CD8-positive, alpha-beta memory T cell (primary cell): ENCODE measurements at regions of chr13 and their contacts with region 1.

Region 1: GRCh38 chr13:48094781-48095502 is at the start of gene MED4:
- DNase-seq: peak; percentile 95 to 98 (median 96)
- H3K4me3 ChIP-seq: peak within 1 kb of the TSS; percentile 85
- H3K4me3 Mint-ChIP-seq: peak within 1 kb of the TSS; percentile 91 to 98 (median 96)
- H3K27ac ChIP-seq: peak within 1 kb of the TSS; percentile 87
- H3K27ac Mint-ChIP-seq: peak within 1 kb of the TSS; percentile 86 to 99 (median 96)
- H3K4me1 ChIP-seq: peaks cover 27% of the 10 kb centered on the region
- H3K4me1 Mint-ChIP-seq: peaks cover 41 to 56% (median 51%) of the 10 kb centered on the region in 3 donors
- H3K27me3 ChIP-seq: no peaks in the 10 kb centered on the region
- H3K27me3 Mint-ChIP-seq: peaks cover 2 to 3% of the 10 kb centered on the region in 2 donors
- total RNA-seq, gene MED4: 61.1 to 68.1 TPM

Region 2: GRCh38 chr13:47917022-47917574 is 177.8 kb before region 1 on chr13:
- CTCF ChIA-PET with region 1: no interaction called
- POLR2A ChIA-PET with region 1: no interaction called
- DNase-seq: no peak
- H3K4me3 ChIP-seq: no peak overlapping the region
- H3K4me3 Mint-ChIP-seq: no peak overlapping the region
- H3K27ac ChIP-seq: no peak overlapping the region
- H3K27ac Mint-ChIP-seq: no peak overlapping the region
- H3K4me1 ChIP-seq: no peaks in the 10 kb centered on the region
- H3K4me1 Mint-ChIP-seq: no peaks in the 10 kb centered on the region
- H3K27me3 ChIP-seq: no peaks in the 10 kb centered on the region
- H3K27me3 Mint-ChIP-seq: peaks cover 0 to 1% of the 10 kb centered on the region in 2 donors

Region 3: GRCh38 chr13:48037346-48038173 is 57.4 kb before region 1 on chr13 and contains the start of gene NUDT15:
- CTCF ChIA-PET with region 1: interaction called, 39 read pairs
- POLR2A ChIA-PET with region 1: interaction called, 13 read pairs
- DNase-seq: peak; percentile 92 to 97 (median 96)
- H3K4me3 ChIP-seq: peak within 1 kb of the TSS; percentile 87
- H3K4me3 Mint-ChIP-seq: peak within 1 kb of the TSS; percentile 92 to 97 (median 95)
- H3K27ac ChIP-seq: peak within 1 kb of the TSS; percentile 98
- H3K27ac Mint-ChIP-seq: peak within 1 kb of the TSS; percentile 94 to 100 (median 98)
- H3K4me1 ChIP-seq: peaks cover 18% of the 10 kb centered on the region
- H3K4me1 Mint-ChIP-seq: peaks cover 24 to 42% (median 35%) of the 10 kb centered on the region in 3 donors
- H3K27me3 ChIP-seq: no peaks in the 10 kb centered on the region
- H3K27me3 Mint-ChIP-seq: peaks cover 0 to 4% of the 10 kb centered on the region in 2 donors
- total RNA-seq, gene NUDT15: 23.9 to 24.0 TPM

Region 4: DNA sequence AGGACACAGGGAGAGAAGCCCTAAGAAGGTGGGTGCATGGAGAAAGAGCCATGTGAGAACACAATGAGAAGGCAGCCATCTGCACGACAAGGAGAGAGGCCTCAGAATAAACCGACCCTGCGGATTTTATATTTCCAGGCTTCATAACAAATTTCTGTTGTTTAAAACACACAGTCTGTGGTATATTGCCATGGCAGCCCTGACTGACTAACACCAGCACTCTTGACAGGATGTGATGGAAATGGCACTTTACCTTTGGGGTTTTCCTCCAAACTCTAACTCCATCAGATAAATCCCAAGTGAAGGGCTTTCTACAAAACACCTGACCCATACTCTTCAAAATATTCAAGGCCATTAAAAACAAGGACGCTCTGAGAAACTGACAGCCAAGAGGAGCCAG is 13.2 kb after region 1 on chr13:
- CTCF ChIA-PET with region 1: interaction called, 12 read pairs
- POLR2A ChIA-PET with region 1: no interaction called
- DNase-seq: no peak
- H3K4me3 ChIP-seq: no peak overlapping the region
- H3K4me3 Mint-ChIP-seq: no peak overlapping the region
- H3K27ac ChIP-seq: no peak overlapping the region
- H3K27ac Mint-ChIP-seq: no peak overlapping the region
- H3K4me1 ChIP-seq: no peaks in the 10 kb centered on the region
- H3K4me1 Mint-ChIP-seq: peaks cover 0 to 2% (median 0%) of the 10 kb centered on the region in 3 donors
- H3K27me3 ChIP-seq: no peaks in the 10 kb centered on the region
- H3K27me3 Mint-ChIP-seq: peaks cover 11 to 26% of the 10 kb centered on the region in 2 donors

Region 5: GRCh38 chr13:48258002-48258401 is 163.1 kb after region 1 on chr13:
- CTCF ChIA-PET with region 1: no interaction called
- POLR2A ChIA-PET with region 1: no interaction called
- DNase-seq: no peak
- H3K4me3 ChIP-seq: no peak overlapping the region
- H3K4me3 Mint-ChIP-seq: no peak overlapping the region
- H3K27ac ChIP-seq: no peak overlapping the region
- H3K27ac Mint-ChIP-seq: peak overlapping the region in 5 of 8 donors; percentile 32 to 72 (median 66)
- H3K4me1 ChIP-seq: no peaks in the 10 kb centered on the region
- H3K4me1 Mint-ChIP-seq: peaks cover 47 to 81% (median 74%) of the 10 kb centered on the region in 3 donors
- H3K27me3 ChIP-seq: no peaks in the 10 kb centered on the region
- H3K27me3 Mint-ChIP-seq: no peaks in the 10 kb centered on the region

Region 6: GRCh38 chr13:48303359-48304142 is 208.6 kb after region 1 on chr13 and contains the start of gene RB1:
- CTCF ChIA-PET with region 1: interaction called, 10 read pairs
- POLR2A ChIA-PET with region 1: interaction called, 3 read pairs
- DNase-seq: peak; percentile 89 to 93 (median 90)
- H3K4me3 ChIP-seq: peak within 1 kb of the TSS; percentile 66
- H3K4me3 Mint-ChIP-seq: peak within 1 kb of the TSS; percentile 97 to 99 (median 98)
- H3K27ac ChIP-seq: peak within 1 kb of the TSS; percentile 99
- H3K27ac Mint-ChIP-seq: peak within 1 kb of the TSS; percentile 97 to 100 (median 99)
- H3K4me1 ChIP-seq: peaks cover 29% of the 10 kb centered on the region
- H3K4me1 Mint-ChIP-seq: peaks cover 27 to 45% (median 39%) of the 10 kb centered on the region in 3 donors
- H3K27me3 ChIP-seq: no peaks in the 10 kb centered on the region
- H3K27me3 Mint-ChIP-seq: no peaks in the 10 kb centered on the region
- total RNA-seq, gene RB1: 38.2 to 38.9 TPM